CD8-positive, alpha-beta memory T cell (primary cell): ENCODE measurements at regions of chr11 and their contacts with region 1.

Region 1: DNA sequence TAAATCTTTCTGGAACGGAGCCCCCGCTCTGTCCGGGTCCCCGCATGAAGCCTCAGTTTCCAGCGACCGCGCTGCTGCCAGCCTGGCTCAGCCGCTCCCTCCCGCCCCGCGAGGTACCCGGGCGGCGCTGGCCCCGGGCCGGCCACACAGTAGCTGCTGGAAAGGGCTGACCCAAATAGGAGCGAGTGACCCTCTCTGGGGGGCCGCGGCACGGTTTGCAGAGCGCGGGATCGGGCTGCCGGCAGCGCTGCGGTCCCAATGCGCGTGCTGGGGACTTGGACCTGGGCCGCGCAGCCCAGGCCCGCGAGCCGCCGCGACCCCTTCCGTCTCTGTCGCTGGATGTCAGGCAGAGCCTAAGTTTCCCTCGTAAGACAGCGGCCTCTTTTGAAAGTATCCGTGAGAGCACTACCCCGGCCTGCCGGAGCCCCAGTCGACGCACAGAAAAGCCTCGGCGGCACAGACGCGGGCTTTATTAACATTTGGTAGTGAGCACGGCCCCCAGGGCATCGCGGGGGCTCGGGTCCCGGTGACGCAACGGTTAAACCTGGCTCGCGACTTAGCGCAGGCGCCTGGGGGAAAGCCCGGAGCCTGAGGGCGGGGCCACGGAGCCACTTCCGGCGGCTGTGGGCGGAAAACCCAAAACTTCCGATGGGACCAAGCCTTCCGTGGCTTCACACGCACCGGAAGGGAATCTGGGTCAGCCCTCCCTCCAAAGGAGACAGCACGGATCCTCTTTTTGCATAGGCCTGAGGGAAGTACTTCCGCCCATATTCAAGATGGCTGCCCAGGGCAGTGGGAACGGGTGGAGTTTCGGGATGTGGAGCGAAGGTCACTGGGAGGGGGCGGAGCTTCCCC is 14.9 kb downstream of the BAD start:
- DNase-seq: peak; percentile 95 to 98 (median 98)
- H3K4me3 ChIP-seq: peak overlapping the region; percentile 96
- H3K4me3 Mint-ChIP-seq: peak overlapping the region; percentile 93 to 99 (median 98)
- H3K27ac ChIP-seq: peak overlapping the region; percentile 86
- H3K27ac Mint-ChIP-seq: peak overlapping the region; percentile 96 to 99 (median 98)
- H3K4me1 ChIP-seq: peaks cover 22% of the 10 kb centered on the region
- H3K4me1 Mint-ChIP-seq: peaks cover 19 to 28% (median 20%) of the 10 kb centered on the region in 3 donors
- H3K27me3 ChIP-seq: no peaks in the 10 kb centered on the region
- H3K27me3 Mint-ChIP-seq: peaks cover 0 to 3% of the 10 kb centered on the region in 2 donors

Region 2: GRCh38 chr11:64240394-64241174 is 29.0 kb before region 1 on chr11 and contains the start of gene FKBP2:
- CTCF ChIA-PET with region 1: interaction called, 124 read pairs
- POLR2A ChIA-PET with region 1: interaction called, 44 read pairs
- DNase-seq: peak; percentile 97 to 99 (median 99)
- H3K4me3 ChIP-seq: peak within 1 kb of the TSS; percentile 76
- H3K4me3 Mint-ChIP-seq: peak within 1 kb of the TSS; percentile 87 to 97 (median 90)
- H3K27ac ChIP-seq: peak within 1 kb of the TSS; percentile 99
- H3K27ac Mint-ChIP-seq: peak within 1 kb of the TSS; percentile 99 to 100 (median 100)
- H3K4me1 ChIP-seq: peaks cover 36% of the 10 kb centered on the region
- H3K4me1 Mint-ChIP-seq: peaks cover 18 to 62% (median 23%) of the 10 kb centered on the region in 3 donors
- H3K27me3 ChIP-seq: no peaks in the 10 kb centered on the region
- H3K27me3 Mint-ChIP-seq: no peaks in the 10 kb centered on the region
- total RNA-seq, gene FKBP2: 27.9 to 28.4 TPM

Region 3: DNA sequence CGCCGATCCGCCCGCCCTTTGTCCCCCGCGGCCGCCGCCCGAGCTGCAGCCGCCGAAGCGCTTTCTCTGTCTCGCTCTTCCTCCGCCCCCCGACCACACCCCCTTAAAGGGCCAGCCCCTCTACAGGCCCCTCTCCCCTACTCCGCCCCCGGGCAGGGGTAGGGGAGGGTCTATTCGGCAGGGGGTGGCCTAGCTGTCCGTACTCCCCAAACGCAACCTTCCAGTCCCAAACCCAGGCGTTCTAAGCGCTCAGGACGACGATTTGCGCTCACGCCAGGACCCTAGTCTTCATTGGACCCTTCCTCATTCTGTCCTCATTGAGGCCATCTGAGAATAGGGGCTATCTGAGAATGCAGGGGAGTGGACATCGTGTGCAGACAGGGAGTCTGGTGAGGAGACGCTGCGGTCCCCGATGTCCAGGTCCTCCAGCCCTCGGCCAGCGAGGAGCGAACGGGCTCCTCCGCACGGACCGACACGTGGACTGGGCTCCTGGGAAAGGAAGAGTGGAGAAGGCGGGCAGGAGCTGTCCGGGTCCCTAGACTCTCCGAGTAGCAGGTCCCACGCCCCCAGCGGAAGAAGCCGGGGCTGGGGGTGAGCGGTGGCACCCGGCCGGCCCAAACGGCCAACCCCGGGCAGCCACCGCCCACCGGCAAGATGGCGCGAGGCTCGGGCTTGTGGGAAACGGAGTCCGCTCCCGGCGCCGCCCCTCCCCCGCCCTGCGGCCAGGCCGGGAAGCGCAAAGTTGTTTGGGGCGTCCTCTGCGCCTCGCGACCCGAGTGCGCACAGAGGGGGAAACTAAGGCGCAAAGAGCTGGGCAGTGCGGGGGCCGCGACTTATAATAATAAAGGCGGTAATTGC is 22.5 kb before region 1 on chr11 and contains the start of gene PPP1R14B:
- CTCF ChIA-PET with region 1: interaction called, 124 read pairs
- POLR2A ChIA-PET with region 1: interaction called, 44 read pairs
- DNase-seq: peak; percentile 66 to 86 (median 73)
- H3K4me3 ChIP-seq: peak within 1 kb of the TSS; percentile 100
- H3K4me3 Mint-ChIP-seq: peak within 1 kb of the TSS; percentile 83 to 96 (median 86)
- H3K27ac ChIP-seq: peak within 1 kb of the TSS; percentile 67
- H3K27ac Mint-ChIP-seq: peak within 1 kb of the TSS; percentile 79 to 96 (median 88)
- H3K4me1 ChIP-seq: peaks cover 42% of the 10 kb centered on the region
- H3K4me1 Mint-ChIP-seq: peaks cover 25 to 62% (median 29%) of the 10 kb centered on the region in 3 donors
- H3K27me3 ChIP-seq: no peaks in the 10 kb centered on the region
- H3K27me3 Mint-ChIP-seq: no peaks in the 10 kb centered on the region
- total RNA-seq, gene PPP1R14B: 365 to 381 TPM

Region 4: GRCh38 chr11:64284048-64284961 is 14.7 kb after region 1 on chr11 and contains the start of gene BAD:
- CTCF ChIA-PET with region 1: interaction called, 19 read pairs
- POLR2A ChIA-PET with region 1: interaction called, 68 read pairs
- DNase-seq: peak; percentile 87 to 96 (median 92)
- H3K4me3 ChIP-seq: peak within 1 kb of the TSS; percentile 100
- H3K4me3 Mint-ChIP-seq: peak within 1 kb of the TSS; percentile 86 to 98 (median 90)
- H3K27ac ChIP-seq: peak within 1 kb of the TSS; percentile 100
- H3K27ac Mint-ChIP-seq: peak within 1 kb of the TSS; percentile 97 to 100 (median 99)
- H3K4me1 ChIP-seq: peaks cover 22% of the 10 kb centered on the region
- H3K4me1 Mint-ChIP-seq: peaks cover 13 to 28% (median 21%) of the 10 kb centered on the region in 3 donors
- H3K27me3 ChIP-seq: no peaks in the 10 kb centered on the region
- H3K27me3 Mint-ChIP-seq: no peaks in the 10 kb centered on the region
- total RNA-seq, gene BAD: 40.4 to 40.9 TPM

Region 5: DNA sequence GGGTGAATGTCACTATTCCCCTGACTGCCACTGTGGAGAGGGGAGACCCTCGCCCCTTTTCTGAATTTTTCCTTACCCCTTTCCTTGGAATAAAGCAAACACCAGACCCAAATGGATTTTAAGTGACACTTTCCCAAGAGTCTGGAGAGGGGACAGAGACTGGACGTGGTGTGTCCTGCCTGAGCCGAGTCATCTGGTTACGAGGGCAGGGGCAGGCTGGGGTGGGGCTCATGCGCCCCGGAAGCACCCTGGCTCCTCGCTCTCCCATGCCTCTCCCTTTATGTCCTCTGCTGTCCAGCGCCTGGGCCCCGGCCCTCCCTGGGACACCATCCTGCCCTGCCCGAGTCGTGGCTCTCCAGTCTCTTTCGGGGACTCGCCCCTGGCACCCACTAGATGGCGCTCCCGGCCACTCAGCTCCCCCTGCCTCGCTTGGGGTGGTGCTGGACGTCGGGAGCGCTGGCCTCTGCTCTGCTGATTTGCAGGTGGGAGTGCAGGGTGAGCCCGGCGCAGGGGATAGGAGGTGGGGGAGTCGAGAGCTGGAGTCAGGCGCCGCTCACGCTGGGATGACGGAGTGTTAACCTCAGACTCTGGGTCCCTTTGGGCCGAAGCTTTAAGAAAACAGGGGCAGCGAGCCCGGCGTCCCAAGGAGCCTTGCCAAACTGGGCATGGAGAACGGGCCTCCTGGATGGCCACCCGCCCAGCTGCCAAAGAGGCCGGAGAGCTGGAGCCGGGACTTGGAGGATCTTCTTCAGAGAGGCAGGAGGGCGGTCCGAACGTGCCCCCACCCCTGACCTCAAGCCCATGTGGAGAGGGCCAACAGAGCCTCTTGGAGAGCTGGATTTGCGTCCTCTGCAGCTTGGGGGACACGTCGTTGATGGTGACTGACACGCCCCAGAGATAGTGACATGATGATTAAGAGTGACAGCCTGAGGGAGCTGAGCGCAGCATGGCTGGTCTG is 179.3 kb after region 1 on chr11:
- CTCF ChIA-PET with region 1: no interaction called
- POLR2A ChIA-PET with region 1: no interaction called
- DNase-seq: peak; percentile 48 to 77 (median 56)
- H3K4me3 ChIP-seq: peak overlapping the region; percentile 72
- H3K4me3 Mint-ChIP-seq: peak overlapping the region; percentile 65 to 89 (median 85)
- H3K27ac ChIP-seq: no peak overlapping the region
- H3K27ac Mint-ChIP-seq: peak overlapping the region in 4 of 8 donors; percentile 35 to 73 (median 54)
- H3K4me1 ChIP-seq: peaks cover 18% of the 10 kb centered on the region
- H3K4me1 Mint-ChIP-seq: peaks cover 14 to 23% (median 14%) of the 10 kb centered on the region in 3 donors
- H3K27me3 ChIP-seq: peaks cover 7% of the 10 kb centered on the region
- H3K27me3 Mint-ChIP-seq: peaks cover 4 to 22% of the 10 kb centered on the region in 2 donors